H1 (cell line): ENCODE measurements at regions of chr10 and their contacts with region 1.

Region 1: GRCh38 chr10:1297566-1298301 is 241.5 kb downstream of the WDR37 start:
- DNase-seq: peak; percentile 25 to 73
- H3K4me3 ChIP-seq: no peak overlapping the region
- H3K27ac ChIP-seq: no peak overlapping the region
- H3K4me1 ChIP-seq: peaks cover 0 to 17% (median 10%) of the 10 kb centered on the region in 4 experiments; a peak in 5 of 7 replicates
- H3K27me3 ChIP-seq: no peaks in the 10 kb centered on the region; a peak in 1 of 7 replicates
- CTCF ChIP-seq: peak; percentile 52 to 66 (median 59)
- EP300 ChIP-seq: no peak
- POLR2A ChIP-seq: no peak
- RAD21 ChIP-seq: peak; percentile 47 to 65

Region 2: GRCh38 chr10:1310271-1310789 is 12.6 kb after region 1 on chr10:
- CTCF ChIA-PET with region 1: interaction called, 4 read pairs
- POLR2A ChIA-PET with region 1: interaction called, 21 read pairs
- DNase-seq: peak; percentile 25 to 66
- H3K4me3 ChIP-seq: peak overlapping the region in 3 of 4 experiments; percentile 21 to 46 (median 38); a peak in 5 of 8 replicates
- H3K27ac ChIP-seq: peak overlapping the region; percentile 96
- H3K4me1 ChIP-seq: peaks cover 15 to 23% (median 22%) of the 10 kb centered on the region in 4 experiments
- H3K27me3 ChIP-seq: no peaks in the 10 kb centered on the region
- CTCF ChIP-seq: no peak
- EP300 ChIP-seq: peak in 1 of 2 experiments; percentile 87; a peak in 2 of 3 replicates
- POLR2A ChIP-seq: no peak; a peak in 1 of 3 replicates
- RAD21 ChIP-seq: no peak

Region 3: DNA sequence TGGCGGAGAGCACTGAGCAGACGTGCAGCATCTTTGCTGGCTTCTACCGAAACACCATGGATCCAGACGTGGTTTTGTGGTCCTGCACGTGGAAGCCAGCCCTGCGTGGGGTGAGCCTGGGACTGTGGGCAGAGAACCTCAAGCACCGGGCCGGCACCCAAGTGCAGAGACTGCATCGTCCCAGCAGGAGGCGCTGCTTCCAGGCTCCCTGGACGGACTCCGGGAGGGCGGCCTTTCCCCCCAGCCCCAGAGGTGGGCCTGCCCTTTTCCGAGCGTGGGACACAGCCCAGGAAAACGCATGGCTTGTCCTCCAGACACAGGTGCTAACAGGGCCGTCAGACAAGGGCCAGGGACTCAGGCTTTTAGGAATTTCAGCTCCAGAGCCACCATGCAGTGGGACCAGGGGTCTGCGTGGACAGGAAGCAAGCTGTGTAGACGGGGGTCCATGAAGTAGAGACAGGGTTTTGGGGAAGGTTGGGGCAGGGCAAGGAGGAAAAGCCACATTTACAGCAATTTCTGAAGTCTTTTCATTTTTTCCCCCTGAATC is 62.4 kb after region 1 on chr10:
- CTCF ChIA-PET with region 1: interaction called, 13 read pairs
- POLR2A ChIA-PET with region 1: interaction called, 3 read pairs
- DNase-seq: peak; percentile 21 to 87
- H3K4me3 ChIP-seq: no peak overlapping the region
- H3K27ac ChIP-seq: no peak overlapping the region
- H3K4me1 ChIP-seq: peaks cover 4 to 20% (median 7%) of the 10 kb centered on the region in 4 experiments
- H3K27me3 ChIP-seq: 0 out of 7 replicates have a peak, but pooled peaks cover 0 to 2% (median 0%) of the 10 kb centered on the region in 4 experiments
- CTCF ChIP-seq: peak; percentile 66 to 85 (median 83)
- EP300 ChIP-seq: no peak
- POLR2A ChIP-seq: no peak
- RAD21 ChIP-seq: peak; percentile 48 to 61

Region 4: GRCh38 chr10:1368842-1369171 is 71.1 kb after region 1 on chr10:
- CTCF ChIA-PET with region 1: interaction called, 25 read pairs
- POLR2A ChIA-PET with region 1: interaction called, 5 read pairs
- DNase-seq: peak; percentile 43 to 74
- H3K4me3 ChIP-seq: peak overlapping the region in 1 of 4 experiments; percentile 11; a peak in 1 of 8 replicates
- H3K27ac ChIP-seq: no peak overlapping the region
- H3K4me1 ChIP-seq: peaks cover 0 to 6% (median 4%) of the 10 kb centered on the region in 4 experiments; a peak in 5 of 7 replicates
- H3K27me3 ChIP-seq: no peaks in the 10 kb centered on the region
- CTCF ChIP-seq: peak; percentile 72 to 78 (median 73)
- EP300 ChIP-seq: no peak
- POLR2A ChIP-seq: no peak
- RAD21 ChIP-seq: peak; percentile 67 to 69